CD8-positive, alpha-beta T cell (primary cell): ENCODE measurements at regions of chrX and their contacts with region 1.

Region 1: DNA sequence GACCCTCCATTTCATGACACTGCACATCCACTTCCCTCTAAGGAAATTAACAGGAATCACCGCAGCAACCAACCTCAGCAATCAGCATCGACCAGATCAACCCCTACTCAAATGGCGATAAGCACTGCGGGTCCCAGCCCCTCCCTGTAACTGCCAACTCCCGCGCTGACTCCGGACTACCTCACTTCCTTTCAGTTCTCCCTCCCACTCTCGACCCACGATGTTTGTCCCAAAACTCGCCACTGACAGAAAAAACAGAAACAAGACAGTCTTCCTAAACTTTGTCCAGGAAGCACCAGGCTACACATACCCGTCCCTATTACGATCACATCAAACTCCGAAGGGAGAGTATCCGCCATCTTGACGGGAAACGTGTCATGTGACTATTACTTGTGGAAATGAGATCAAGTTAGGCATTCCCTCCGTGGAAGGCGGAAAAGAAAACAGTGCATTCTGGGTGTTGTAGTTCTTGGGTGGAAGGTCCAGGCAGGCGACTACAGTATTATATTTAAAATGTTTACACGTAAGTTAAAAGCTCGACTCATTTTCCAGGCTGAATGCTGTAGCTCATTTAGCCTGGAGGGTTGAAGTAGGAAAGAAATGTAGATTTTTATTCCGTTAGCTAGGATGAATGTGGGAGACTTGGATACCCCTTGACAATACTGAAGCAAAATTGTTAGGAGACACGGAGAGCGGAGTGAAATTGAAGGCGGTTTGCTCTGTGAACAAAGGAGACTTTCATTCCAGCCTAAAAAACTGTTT is at the start of gene CHM:
- DNase-seq: peak; percentile 13 to 86 (median 54)
- ATAC-seq: peak; percentile 94
- H3K4me3 ChIP-seq: peak within 1 kb of the TSS; percentile 67 to 84
- H3K4me3 Mint-ChIP-seq: no peak within 1 kb of the TSS
- H3K27ac ChIP-seq: peak within 1 kb of the TSS; percentile 84 to 95
- H3K27ac Mint-ChIP-seq: no peak within 1 kb of the TSS
- H3K4me1 ChIP-seq: no peaks in the 10 kb centered on the region
- H3K4me1 Mint-ChIP-seq: peaks cover 13% of the 10 kb centered on the region
- H3K27me3 ChIP-seq: no peaks in the 10 kb centered on the region
- H3K27me3 Mint-ChIP-seq: peaks cover 3% of the 10 kb centered on the region
- CTCF ChIP-seq: no peak
- total RNA-seq, gene CHM: 2.4 to 2.5 TPM

Region 2: GRCh38 chrX:85003655-85004244 is 1043.6 kb before region 1 on chrX and contains the start of gene APOOL:
- CTCF ChIA-PET with region 1: no interaction called
- POLR2A ChIA-PET with region 1: no interaction called
- intact Hi-C with region 1: loop called in 1 of 2 experiments (anchors 10 kb)
- DNase-seq: peak; percentile 35 to 84 (median 71)
- ATAC-seq: peak; percentile 96
- H3K4me3 ChIP-seq: peak within 1 kb of the TSS; percentile 55 to 63
- H3K4me3 Mint-ChIP-seq: peak within 1 kb of the TSS; percentile 90
- H3K27ac ChIP-seq: peak within 1 kb of the TSS; percentile 54
- H3K27ac Mint-ChIP-seq: peak within 1 kb of the TSS; percentile 86
- H3K4me1 ChIP-seq: peaks cover 3% of the 10 kb centered on the region
- H3K4me1 Mint-ChIP-seq: peaks cover 35% of the 10 kb centered on the region
- H3K27me3 ChIP-seq: no peaks in the 10 kb centered on the region
- H3K27me3 Mint-ChIP-seq: no peaks in the 10 kb centered on the region
- CTCF ChIP-seq: no peak
- total RNA-seq, gene APOOL: 3.8 to 5.2 TPM

Region 3: GRCh38 chrX:86061407-86061806 is 14.1 kb after region 1 on chrX:
- CTCF ChIA-PET with region 1: no interaction called
- POLR2A ChIA-PET with region 1: no interaction called
- intact Hi-C with region 1: no loop called
- DNase-seq: no peak
- ATAC-seq: no peak
- H3K4me3 ChIP-seq: no peak overlapping the region
- H3K4me3 Mint-ChIP-seq: no peak overlapping the region
- H3K27ac ChIP-seq: no peak overlapping the region
- H3K27ac Mint-ChIP-seq: no peak overlapping the region
- H3K4me1 ChIP-seq: no peaks in the 10 kb centered on the region
- H3K4me1 Mint-ChIP-seq: no peaks in the 10 kb centered on the region
- H3K27me3 ChIP-seq: no peaks in the 10 kb centered on the region
- H3K27me3 Mint-ChIP-seq: peaks cover 15% of the 10 kb centered on the region
- CTCF ChIP-seq: no peak

Region 4: GRCh38 chrX:86121916-86122315 is 74.6 kb after region 1 on chrX:
- CTCF ChIA-PET with region 1: no interaction called
- POLR2A ChIA-PET with region 1: no interaction called
- intact Hi-C with region 1: no loop called
- DNase-seq: no peak
- ATAC-seq: no peak
- H3K4me3 ChIP-seq: no peak overlapping the region
- H3K4me3 Mint-ChIP-seq: no peak overlapping the region
- H3K27ac ChIP-seq: no peak overlapping the region
- H3K27ac Mint-ChIP-seq: no peak overlapping the region
- H3K4me1 ChIP-seq: no peaks in the 10 kb centered on the region
- H3K4me1 Mint-ChIP-seq: no peaks in the 10 kb centered on the region
- H3K27me3 ChIP-seq: no peaks in the 10 kb centered on the region
- H3K27me3 Mint-ChIP-seq: peaks cover 5% of the 10 kb centered on the region
- CTCF ChIP-seq: no peak